ENCODE measurements at regions of chr10 and their contacts with region 1.

Region 1: DNA sequence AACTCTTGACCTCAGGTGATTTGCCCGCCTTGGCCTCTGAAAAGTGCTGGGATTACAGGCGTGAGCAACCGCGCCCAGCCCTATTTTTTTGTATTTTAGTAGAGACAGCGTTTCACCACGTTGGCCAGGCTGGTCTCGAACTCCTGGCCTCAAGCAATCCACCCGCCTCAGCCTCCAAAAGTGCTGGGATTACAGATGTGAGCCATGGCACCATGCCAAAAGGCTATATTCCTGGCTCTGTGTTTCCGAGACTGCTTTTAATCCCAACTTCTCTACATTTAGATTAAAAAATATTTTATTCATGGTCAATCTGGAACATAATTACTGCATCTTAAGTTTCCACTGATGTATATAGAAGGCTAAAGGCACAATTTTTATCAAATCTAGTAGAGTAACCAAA is 11.0 kb upstream of the ANKRD26 start:
- DNase-seq: no peak
- H3K4me3 ChIP-seq: no peak overlapping the region
- H3K27ac ChIP-seq: no peak overlapping the region
- H3K4me1 ChIP-seq: no peaks in the 10 kb centered on the region
- H3K27me3 ChIP-seq: no peaks in the 10 kb centered on the region
- CTCF ChIP-seq: no peak

Region 2: DNA sequence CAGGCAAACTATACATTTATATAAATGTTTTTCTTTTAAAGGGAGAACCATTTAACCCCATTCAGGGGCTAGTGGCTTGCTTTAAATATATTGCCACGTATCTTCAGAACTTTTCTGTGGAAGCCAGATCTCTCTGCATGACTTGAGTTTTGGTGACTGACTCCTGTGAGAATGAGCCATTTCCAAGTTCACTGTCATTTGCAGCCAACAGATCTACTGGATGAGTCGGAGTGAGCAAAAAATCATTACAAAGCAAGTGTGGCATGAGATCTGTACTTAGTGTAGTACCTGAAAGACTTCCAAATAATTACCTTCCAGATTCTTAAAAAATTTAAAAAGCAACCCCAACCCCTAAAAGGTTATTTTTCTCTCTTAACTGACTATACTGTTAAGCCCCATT is 368.2 kb before region 1 on chr10:
- intact Hi-C with region 1: loop called (anchors 10 kb)
- DNase-seq: no peak
- H3K4me3 ChIP-seq: no peak overlapping the region
- H3K27ac ChIP-seq: no peak overlapping the region
- H3K4me1 ChIP-seq: no peaks in the 10 kb centered on the region
- H3K27me3 ChIP-seq: no peaks in the 10 kb centered on the region
- CTCF ChIP-seq: no peak

Region 3: DNA sequence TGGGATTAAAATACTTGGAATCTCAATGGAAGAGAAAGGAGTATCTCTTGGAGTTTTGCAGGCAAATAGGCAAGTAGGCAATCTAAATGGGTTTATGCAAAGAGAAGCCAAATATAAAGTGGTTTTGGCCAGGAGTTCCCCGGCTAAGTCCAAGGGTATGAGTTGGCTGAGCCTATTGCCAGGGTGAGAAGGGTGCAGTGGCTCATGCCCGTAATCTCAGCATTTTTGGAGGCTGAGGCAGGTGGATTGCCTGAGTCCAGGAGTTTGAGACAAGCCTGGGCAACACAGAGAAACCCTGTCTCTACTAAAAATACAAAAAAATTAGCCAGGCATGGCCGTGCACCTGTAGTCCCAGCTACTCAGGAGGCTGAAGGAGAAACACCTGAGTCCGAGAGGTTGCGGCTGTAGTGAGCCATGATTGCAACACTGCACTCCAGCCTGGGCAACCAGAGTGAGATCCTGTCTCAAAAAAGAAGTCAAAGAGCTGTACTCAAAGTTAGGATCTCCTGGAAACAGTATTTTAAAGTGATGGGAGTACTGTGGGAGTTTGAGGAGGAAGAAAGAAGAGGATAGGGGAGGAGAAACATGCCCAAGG is 262.4 kb after region 1 on chr10:
- intact Hi-C with region 1: no loop called
- DNase-seq: no peak
- H3K4me3 ChIP-seq: no peak overlapping the region
- H3K27ac ChIP-seq: no peak overlapping the region
- H3K4me1 ChIP-seq: no peaks in the 10 kb centered on the region
- H3K27me3 ChIP-seq: no peaks in the 10 kb centered on the region
- CTCF ChIP-seq: no peak

Measured in colonic mucosa (tissue), 4 donors.